Mammary epithelial cell (primary cell): ENCODE measurements at regions of chr12 and their contacts with region 1.

Region 1: GRCh38 chr12:50222275-50222795 is 55.2 kb upstream of the CERS5 start:
- DNase-seq: peak; percentile 86
- H3K4me3 ChIP-seq: peak overlapping the region; percentile 76 to 96 (median 78)
- H3K27ac ChIP-seq: peak overlapping the region; percentile 100
- H3K4me1 ChIP-seq: peaks cover 38% of the 10 kb centered on the region
- H3K27me3 ChIP-seq: no peaks in the 10 kb centered on the region
- CTCF ChIP-seq: peak in 1 of 2 donors; percentile 56

Region 2: DNA sequence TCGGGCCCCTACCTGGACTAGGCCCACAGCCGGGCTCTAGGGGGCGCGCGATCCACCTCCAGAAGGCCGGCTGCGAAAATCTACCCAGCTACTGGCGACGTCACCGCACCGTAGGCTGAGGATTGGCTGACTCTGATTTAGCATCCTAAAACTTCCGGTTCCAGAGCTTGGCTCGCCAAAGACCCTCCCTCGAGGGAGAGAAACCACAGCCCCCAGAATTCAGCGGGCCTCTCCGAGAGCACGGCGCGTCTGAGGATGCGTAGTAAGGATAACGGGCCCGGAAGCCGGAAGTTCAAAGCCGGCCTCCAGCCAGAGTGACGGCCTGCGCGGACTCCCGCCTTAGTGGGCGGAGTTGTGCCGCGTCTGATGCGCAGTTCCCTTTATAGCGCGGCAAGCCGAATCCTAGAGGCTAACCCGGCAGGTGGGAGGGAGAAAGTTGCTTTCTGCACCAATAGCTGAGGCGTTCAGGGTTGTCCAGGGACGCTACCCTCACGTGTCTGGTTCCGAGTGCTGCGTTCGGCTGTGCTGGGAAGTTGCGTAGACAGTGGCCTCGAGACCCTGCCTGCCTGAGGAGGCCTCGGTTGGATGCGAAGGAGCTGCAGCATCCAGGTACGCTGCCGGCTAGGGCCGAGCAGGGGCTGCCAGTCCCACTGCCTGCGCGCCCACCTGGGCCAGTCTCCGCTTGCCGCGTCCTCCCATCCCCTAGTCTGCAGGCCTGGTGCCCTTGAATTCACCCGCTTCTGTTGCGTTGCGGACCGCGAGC is 110.5 kb before region 1 on chr12 and contains the start of gene COX14:
- CTCF ChIA-PET with region 1: no interaction called
- dilution Hi-C with region 1: no loop called
- in situ Hi-C with region 1: no loop called
- intact Hi-C with region 1: loop called (anchors 5 kb)
- DNase-seq: peak; percentile 100
- H3K4me3 ChIP-seq: peak within 1 kb of the TSS; percentile 64 to 100 (median 87)
- H3K27ac ChIP-seq: peak within 1 kb of the TSS; percentile 76
- H3K4me1 ChIP-seq: peaks cover 15% of the 10 kb centered on the region
- H3K27me3 ChIP-seq: no peaks in the 10 kb centered on the region
- CTCF ChIP-seq: peak; percentile 83 to 94
- total RNA-seq, gene COX14: 38.5 to 51.3 TPM

Region 3: GRCh38 chr12:50201978-50202521 is 20.3 kb before region 1 on chr12:
- CTCF ChIA-PET with region 1: no interaction called
- dilution Hi-C with region 1: no loop called
- in situ Hi-C with region 1: no loop called
- intact Hi-C with region 1: loop called (anchors 1 kb)
- DNase-seq: peak; percentile 93
- H3K4me3 ChIP-seq: no peak overlapping the region
- H3K27ac ChIP-seq: peak overlapping the region; percentile 80
- H3K4me1 ChIP-seq: peaks cover 53% of the 10 kb centered on the region
- H3K27me3 ChIP-seq: no peaks in the 10 kb centered on the region
- CTCF ChIP-seq: no peak

Region 4: DNA sequence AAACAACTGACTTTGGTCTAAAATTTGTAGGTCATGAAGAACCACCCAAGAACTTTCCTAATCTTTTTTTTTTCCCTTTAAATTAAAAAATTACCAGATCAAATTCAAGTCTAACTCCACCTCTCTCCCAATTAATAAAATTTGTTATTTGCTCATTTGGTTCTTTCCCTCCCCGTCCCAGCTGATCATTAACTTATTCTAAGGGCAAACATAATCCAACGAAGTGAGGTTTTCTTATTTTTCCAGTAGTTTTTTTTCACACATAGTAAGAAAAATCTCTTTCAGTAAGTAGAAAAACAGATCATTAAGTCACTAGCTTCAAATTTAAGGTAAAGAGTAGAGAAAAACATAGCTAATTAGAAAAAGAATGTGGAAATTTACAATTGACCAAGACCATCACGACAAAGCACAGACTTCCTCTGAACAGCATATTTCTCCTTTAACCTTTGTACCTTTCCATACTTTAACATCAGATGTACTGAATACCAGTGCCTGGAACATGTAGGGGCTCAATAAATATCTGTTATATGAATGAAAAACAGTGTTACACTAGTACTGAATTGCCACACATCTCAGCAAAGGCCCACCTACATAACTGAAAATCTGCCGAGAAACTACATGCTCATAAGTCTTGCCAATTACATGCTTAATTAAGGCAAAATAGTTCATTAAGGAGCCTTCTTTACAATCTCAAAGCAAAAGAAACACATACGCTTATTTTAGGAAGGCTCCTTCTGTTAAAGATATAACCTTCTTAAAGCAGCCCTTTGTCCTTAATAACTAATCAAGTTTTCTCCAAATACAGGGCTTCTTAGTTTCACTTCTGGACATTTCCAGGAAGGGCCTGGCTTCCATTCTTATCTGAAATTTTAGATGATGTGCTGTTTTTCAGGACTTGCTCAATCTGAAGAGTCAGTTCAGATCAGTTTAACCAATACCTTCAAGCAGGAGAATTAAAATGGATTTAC is 49.2 kb after region 1 on chr12:
- CTCF ChIA-PET with region 1: interaction called, 23 read pairs
- dilution Hi-C with region 1: no loop called
- in situ Hi-C with region 1: no loop called
- intact Hi-C with region 1: no loop called
- DNase-seq: no peak
- H3K4me3 ChIP-seq: peak overlapping the region in 2 of 3 experiments; percentile 1 to 7
- H3K27ac ChIP-seq: no peak overlapping the region
- H3K4me1 ChIP-seq: peaks cover 4% of the 10 kb centered on the region
- H3K27me3 ChIP-seq: no peaks in the 10 kb centered on the region
- CTCF ChIP-seq: no peak

Region 5: DNA sequence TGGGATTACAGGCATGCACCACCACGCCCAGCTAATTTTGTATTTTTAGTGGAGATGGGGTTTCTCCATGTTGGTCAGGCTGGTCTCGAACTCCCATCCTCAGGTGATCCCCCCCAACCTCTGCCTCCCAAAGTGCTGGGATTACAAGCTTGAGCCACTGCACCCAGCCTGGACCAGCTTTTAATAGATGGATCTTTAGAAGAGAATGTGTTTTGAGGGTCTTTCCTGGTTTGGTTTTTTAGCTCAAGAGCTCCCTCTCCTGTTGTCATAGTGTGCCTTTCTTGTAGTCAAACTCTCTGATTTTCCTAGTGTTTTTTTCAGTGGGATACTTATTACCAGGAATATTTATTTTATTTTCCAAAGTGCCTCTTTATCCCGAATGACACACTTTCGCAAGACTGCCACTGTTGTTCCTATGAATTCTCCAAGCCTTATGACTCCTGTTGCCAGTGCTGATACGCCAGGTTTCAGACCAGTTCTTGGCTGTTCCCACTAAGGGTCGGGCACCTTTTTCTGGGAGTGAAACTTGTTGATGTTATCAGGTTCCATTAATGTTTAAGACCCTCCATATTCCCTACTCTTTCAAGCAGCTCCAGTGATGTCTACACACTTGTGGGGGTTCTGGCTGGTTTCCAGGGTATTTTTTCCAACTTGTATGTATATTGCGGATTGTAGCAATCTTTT is 92.4 kb after region 1 on chr12:
- CTCF ChIA-PET with region 1: interaction called, 3 read pairs
- dilution Hi-C with region 1: no loop called
- in situ Hi-C with region 1: loop called in 1 of 2 experiments (anchors 25 kb)
- intact Hi-C with region 1: loop called (anchors 1 kb)
- DNase-seq: no peak
- H3K4me3 ChIP-seq: no peak overlapping the region
- H3K27ac ChIP-seq: no peak overlapping the region
- H3K4me1 ChIP-seq: peaks cover 7% of the 10 kb centered on the region
- H3K27me3 ChIP-seq: no peaks in the 10 kb centered on the region
- CTCF ChIP-seq: peak; percentile 63 to 65